Activated B cell treated with CpG ODN at 0.5 μM for 24 hours (primary cell): ENCODE measurements at regions of chr1 and their contacts with region 1.

Region 1: DNA sequence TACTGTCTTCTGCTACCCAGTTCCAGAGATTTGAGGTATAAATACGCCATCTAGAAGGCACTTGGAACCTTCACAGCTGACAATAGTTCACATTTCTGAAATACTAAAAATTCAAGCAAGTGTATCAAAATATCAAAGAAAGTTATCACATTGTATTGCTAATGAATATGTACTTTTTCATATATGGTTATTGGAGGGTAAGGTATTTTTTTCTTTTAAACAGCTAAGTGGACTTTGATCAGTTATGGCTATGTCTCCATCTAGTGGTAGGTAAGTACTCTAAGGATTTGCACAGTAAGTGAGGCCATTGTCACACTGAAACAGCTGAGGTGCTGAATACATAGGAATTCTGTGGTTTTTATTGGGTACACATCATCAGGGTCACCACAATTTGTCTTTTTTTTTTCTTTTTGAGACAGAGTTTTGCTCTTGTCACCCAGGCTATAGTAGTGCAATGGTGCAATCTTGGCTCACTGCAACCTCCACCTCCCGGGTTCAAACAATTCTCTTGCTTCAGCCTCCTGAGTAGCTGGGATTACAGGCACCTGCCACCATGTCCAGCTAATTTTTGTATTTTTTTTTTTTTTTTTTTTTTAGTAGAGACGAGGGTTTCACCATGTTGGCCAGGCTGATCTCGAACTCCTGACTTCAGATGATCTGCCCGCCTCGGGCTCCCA is 49.1 kb upstream of the CR2 start:
- DNase-seq: no peak
- ATAC-seq: peak; percentile 80
- H3K4me3 Mint-ChIP-seq: no peak overlapping the region
- H3K27ac Mint-ChIP-seq: no peak overlapping the region
- H3K4me1 Mint-ChIP-seq: peaks cover 31% of the 10 kb centered on the region
- H3K27me3 Mint-ChIP-seq: no peaks in the 10 kb centered on the region
- CTCF ChIP-seq: peak; percentile 46

Region 2: GRCh38 chr1:206419250-206419649 is 985.7 kb before region 1 on chr1:
- CTCF ChIA-PET with region 1: no interaction called
- POLR2A ChIA-PET with region 1: no interaction called
- intact Hi-C with region 1: no loop called
- DNase-seq: no peak
- ATAC-seq: no peak
- H3K4me3 Mint-ChIP-seq: no peak overlapping the region
- H3K27ac Mint-ChIP-seq: no peak overlapping the region
- H3K4me1 Mint-ChIP-seq: peaks cover 6% of the 10 kb centered on the region
- H3K27me3 Mint-ChIP-seq: no peaks in the 10 kb centered on the region
- CTCF ChIP-seq: no peak

Region 3: DNA sequence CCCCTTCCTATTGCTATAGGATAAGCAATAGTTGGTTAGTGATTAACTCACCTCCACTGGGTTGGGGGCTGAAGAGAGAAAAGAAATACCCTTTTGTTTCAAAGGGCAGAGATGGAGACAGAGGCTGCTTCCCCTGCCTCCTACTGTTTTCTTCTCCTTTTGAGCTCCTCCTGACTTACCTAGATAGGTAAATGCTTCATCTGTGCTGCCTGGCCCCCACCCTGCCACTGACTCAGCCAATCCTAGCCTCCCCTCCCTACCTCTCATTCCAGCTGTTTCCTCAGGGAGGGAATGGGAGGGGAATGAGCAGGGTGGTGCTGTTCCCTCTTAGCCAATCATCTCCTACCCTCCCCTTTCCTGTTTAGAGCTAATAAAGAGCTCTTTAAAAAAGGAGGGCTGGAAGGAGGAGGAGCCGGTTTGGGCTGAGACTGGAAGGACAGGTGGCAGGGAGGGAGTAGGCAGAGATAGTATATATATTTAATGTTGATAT is 372.4 kb before region 1 on chr1 and contains the start of gene C1orf116:
- CTCF ChIA-PET with region 1: no interaction called
- POLR2A ChIA-PET with region 1: no interaction called
- intact Hi-C with region 1: no loop called
- DNase-seq: no peak
- ATAC-seq: no peak
- H3K4me3 Mint-ChIP-seq: no peak within 1 kb of the TSS
- H3K27ac Mint-ChIP-seq: no peak within 1 kb of the TSS
- H3K4me1 Mint-ChIP-seq: no peaks in the 10 kb centered on the region
- H3K27me3 Mint-ChIP-seq: peaks cover 37% of the 10 kb centered on the region
- CTCF ChIP-seq: no peak
- total RNA-seq, gene C1orf116: 0.09 TPM in 1 of 2 replicates, not detected in the other

Region 4: GRCh38 chr1:207052911-207053769 is 351.8 kb before region 1 on chr1 and contains the start of gene PFKFB2:
- CTCF ChIA-PET with region 1: interaction called, 14 read pairs
- POLR2A ChIA-PET with region 1: no interaction called
- intact Hi-C with region 1: loop called (anchors 1 kb)
- DNase-seq: peak; percentile 94
- ATAC-seq: peak; percentile 86
- H3K4me3 Mint-ChIP-seq: peak within 1 kb of the TSS; percentile 98
- H3K27ac Mint-ChIP-seq: peak within 1 kb of the TSS; percentile 98
- H3K4me1 Mint-ChIP-seq: peaks cover 56% of the 10 kb centered on the region
- H3K27me3 Mint-ChIP-seq: no peaks in the 10 kb centered on the region
- CTCF ChIP-seq: no peak
- total RNA-seq, gene PFKFB2: 7.6 and 10.1 TPM in 2 replicates

Region 5: DNA sequence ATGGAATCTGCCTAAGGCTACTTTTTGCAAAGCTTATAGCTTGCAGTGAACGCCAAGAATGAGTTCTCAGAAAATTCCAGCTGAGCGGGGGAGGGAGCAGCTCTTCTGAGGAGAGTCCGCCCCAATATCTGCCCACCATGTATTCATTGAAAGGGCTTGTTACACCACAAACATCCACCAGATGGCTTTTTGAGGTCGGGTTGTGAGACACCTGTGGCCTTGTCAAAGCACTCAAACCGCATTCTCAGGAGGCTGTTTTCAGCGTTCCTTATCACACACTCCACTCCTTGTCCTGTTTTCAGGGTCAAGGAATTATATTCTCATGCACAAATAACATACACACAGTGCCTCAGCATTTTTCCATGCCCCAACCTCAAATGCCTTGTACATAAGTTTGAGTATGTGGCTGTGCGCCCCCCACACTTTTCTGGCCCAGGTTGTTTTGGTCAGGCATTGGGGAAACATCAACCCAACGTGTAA is 320.2 kb before region 1 on chr1:
- CTCF ChIA-PET with region 1: interaction called, 146 read pairs
- POLR2A ChIA-PET with region 1: interaction called, 7 read pairs
- intact Hi-C with region 1: loop called (anchors 1 kb)
- DNase-seq: no peak
- ATAC-seq: peak; percentile 98
- H3K4me3 Mint-ChIP-seq: no peak overlapping the region
- H3K27ac Mint-ChIP-seq: no peak overlapping the region
- H3K4me1 Mint-ChIP-seq: peaks cover 9% of the 10 kb centered on the region
- H3K27me3 Mint-ChIP-seq: peaks cover 2% of the 10 kb centered on the region
- CTCF ChIP-seq: no peak

Region 6: GRCh38 chr1:207429963-207430362 is 25.0 kb after region 1 on chr1:
- CTCF ChIA-PET with region 1: interaction called, 14 read pairs
- POLR2A ChIA-PET with region 1: interaction called, 5 read pairs
- intact Hi-C with region 1: no loop called
- DNase-seq: no peak
- ATAC-seq: peak; percentile 19
- H3K4me3 Mint-ChIP-seq: peak overlapping the region; percentile 15
- H3K27ac Mint-ChIP-seq: peak overlapping the region; percentile 74
- H3K4me1 Mint-ChIP-seq: peaks cover 87% of the 10 kb centered on the region
- H3K27me3 Mint-ChIP-seq: no peaks in the 10 kb centered on the region
- CTCF ChIP-seq: no peak

Region 7: DNA sequence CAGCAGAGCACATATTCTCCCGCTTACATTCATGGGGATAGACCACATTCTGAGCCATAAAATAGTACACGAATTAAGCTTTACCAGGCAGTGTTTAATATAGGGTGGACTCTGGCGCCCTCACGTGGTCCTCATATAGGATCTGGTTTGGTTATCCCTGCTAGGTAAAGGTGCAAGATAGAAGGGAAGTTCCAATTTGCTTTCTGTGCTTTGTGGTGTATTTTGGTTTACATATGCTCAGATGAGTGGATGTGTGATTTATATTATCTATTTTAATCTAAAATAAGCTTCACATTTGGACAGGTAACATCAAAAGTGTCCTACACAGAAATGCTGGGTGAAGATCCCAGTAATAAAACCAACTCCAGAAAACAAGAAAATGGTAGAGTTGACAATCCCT is 94.6 kb after region 1 on chr1:
- CTCF ChIA-PET with region 1: interaction called, 70 read pairs
- POLR2A ChIA-PET with region 1: interaction called, 5 read pairs
- intact Hi-C with region 1: loop called (anchors 1 kb)
- DNase-seq: peak; percentile 42
- ATAC-seq: peak; percentile 61
- H3K4me3 Mint-ChIP-seq: no peak overlapping the region
- H3K27ac Mint-ChIP-seq: peak overlapping the region; percentile 64
- H3K4me1 Mint-ChIP-seq: peaks cover 38% of the 10 kb centered on the region
- H3K27me3 Mint-ChIP-seq: no peaks in the 10 kb centered on the region
- CTCF ChIP-seq: peak; percentile 60